Panc1 (cell line): ENCODE measurements at regions of chr14 and their contacts with region 1.

Region 1: DNA sequence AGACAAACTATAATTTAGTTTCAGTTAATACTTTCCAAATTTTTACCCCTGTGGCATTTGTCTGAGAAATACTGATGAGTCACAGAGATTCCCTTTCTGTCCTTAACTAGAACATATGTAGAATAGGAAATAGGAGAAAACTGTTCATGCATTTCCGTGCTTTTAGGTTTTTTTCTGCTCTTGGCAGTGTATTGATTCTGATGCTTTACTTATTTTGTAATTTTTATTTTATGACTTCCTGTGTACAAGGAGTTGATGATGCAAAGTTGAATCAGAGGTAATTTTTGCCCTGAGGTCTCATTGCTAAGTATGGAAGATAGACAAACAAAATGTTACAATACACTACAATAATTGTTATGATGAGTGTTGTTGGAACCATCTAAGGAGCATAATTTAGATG is 23.1 kb downstream of the MNAT1 start:
- DNase-seq: peak; percentile 38
- ATAC-seq: peak; percentile 53; the same call in 1 of the 2 replicates
- H3K4me3 ChIP-seq: no peak overlapping the region
- H3K27ac ChIP-seq: no peak overlapping the region; the same call in 1 of the 2 replicates
- H3K4me1 ChIP-seq: peaks cover 11% of the 10 kb centered on the region; the same call in 1 of the 2 replicates
- H3K27me3 ChIP-seq: no peaks in the 10 kb centered on the region
- CTCF ChIP-seq: no peak

Region 2: DNA sequence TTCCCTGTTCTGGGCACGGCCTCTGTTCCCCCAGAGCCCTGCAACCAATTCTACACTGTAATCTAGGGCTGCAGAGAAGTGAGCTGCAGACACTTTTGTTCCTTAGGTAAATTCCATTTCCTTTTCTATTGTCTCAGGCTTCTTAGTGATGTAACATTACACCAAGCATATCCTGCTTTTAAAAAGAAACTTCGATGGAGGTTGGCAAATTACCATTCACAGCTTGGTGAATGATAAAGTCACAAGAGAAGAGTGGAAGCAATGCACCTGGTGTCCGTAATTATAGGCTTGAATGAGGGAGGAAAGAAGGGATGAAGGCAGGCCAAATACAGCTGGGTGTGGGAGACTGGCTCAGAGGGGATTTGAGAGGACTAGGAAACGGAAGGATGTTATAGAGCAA is 440.0 kb before region 1 on chr14:
- CTCF ChIA-PET with region 1: no interaction called
- POLR2A ChIA-PET with region 1: no interaction called
- in situ Hi-C with region 1: no loop called
- intact Hi-C with region 1: no loop called
- DNase-seq: no peak
- ATAC-seq: no peak
- H3K4me3 ChIP-seq: no peak overlapping the region
- H3K27ac ChIP-seq: no peak overlapping the region
- H3K4me1 ChIP-seq: no peaks in the 10 kb centered on the region
- H3K27me3 ChIP-seq: peaks cover 2% of the 10 kb centered on the region; the same call in 1 of the 2 replicates
- CTCF ChIP-seq: no peak

Region 3: GRCh38 chr14:60670989-60671388 is 86.6 kb before region 1 on chr14:
- CTCF ChIA-PET with region 1: no interaction called
- POLR2A ChIA-PET with region 1: interaction called, 15 read pairs
- in situ Hi-C with region 1: no loop called
- intact Hi-C with region 1: no loop called
- DNase-seq: no peak
- ATAC-seq: no peak
- H3K4me3 ChIP-seq: no peak overlapping the region
- H3K27ac ChIP-seq: no peak overlapping the region
- H3K4me1 ChIP-seq: no peaks in the 10 kb centered on the region
- H3K27me3 ChIP-seq: no peaks in the 10 kb centered on the region
- CTCF ChIP-seq: no peak

Region 4: GRCh38 chr14:60705100-60705499 is 52.5 kb before region 1 on chr14:
- CTCF ChIA-PET with region 1: interaction called, 6 read pairs
- POLR2A ChIA-PET with region 1: interaction called, 14 read pairs
- in situ Hi-C with region 1: no loop called
- intact Hi-C with region 1: no loop called
- DNase-seq: no peak
- ATAC-seq: no peak
- H3K4me3 ChIP-seq: no peak overlapping the region
- H3K27ac ChIP-seq: no peak overlapping the region
- H3K4me1 ChIP-seq: no peaks in the 10 kb centered on the region
- H3K27me3 ChIP-seq: no peaks in the 10 kb centered on the region
- CTCF ChIP-seq: no peak

Region 5: DNA sequence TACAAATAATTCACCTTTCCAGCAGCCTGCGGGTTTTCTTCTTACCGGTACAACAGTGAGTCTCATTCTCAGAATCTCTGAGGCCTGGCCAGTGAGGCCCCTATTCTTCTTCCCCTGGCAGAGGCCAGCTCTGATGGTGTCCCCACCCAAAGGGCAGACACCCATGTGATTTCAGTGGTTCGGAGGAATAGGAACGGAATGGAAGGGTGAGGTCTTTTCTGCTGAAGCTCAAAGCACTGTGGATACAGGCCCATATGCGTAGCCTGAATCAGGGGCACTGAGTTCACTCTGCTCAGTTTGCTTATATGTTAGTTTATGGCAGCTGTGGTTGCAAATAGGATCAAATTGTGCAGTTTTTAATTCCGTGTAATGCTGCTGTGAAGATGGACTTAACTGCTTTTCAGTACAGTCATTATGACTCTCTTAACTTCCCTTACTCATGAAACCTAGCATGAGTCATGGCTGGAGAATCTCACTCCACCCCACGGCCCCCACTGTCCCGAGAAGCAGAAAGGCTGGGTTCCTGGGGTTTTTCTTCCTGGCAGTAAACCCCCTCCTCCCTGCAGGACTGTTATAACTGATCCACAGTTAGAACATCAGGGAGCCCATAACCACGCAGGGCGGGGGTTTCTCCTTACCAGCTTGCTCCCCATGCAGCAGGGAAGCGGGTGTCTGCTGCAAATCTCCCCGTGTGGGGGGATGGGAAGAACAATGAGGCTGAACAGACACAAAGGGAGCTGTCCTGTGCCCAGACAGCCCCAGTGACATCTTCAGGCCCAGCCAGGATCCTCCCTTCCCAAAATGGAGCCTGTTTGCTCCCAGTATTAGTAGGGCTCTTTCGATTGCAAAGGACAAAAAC is 346.1 kb after region 1 on chr14:
- CTCF ChIA-PET with region 1: no interaction called
- POLR2A ChIA-PET with region 1: no interaction called
- in situ Hi-C with region 1: no loop called
- intact Hi-C with region 1: no loop called
- DNase-seq: peak; percentile 56
- ATAC-seq: peak; percentile 94
- H3K4me3 ChIP-seq: no peak overlapping the region
- H3K27ac ChIP-seq: no peak overlapping the region
- H3K4me1 ChIP-seq: peaks cover 7% of the 10 kb centered on the region; the same call in 1 of the 2 replicates
- H3K27me3 ChIP-seq: no peaks in the 10 kb centered on the region
- CTCF ChIP-seq: no peak